ENCODE measurements at regions of chr10 and their contacts with region 1.

Region 1: DNA sequence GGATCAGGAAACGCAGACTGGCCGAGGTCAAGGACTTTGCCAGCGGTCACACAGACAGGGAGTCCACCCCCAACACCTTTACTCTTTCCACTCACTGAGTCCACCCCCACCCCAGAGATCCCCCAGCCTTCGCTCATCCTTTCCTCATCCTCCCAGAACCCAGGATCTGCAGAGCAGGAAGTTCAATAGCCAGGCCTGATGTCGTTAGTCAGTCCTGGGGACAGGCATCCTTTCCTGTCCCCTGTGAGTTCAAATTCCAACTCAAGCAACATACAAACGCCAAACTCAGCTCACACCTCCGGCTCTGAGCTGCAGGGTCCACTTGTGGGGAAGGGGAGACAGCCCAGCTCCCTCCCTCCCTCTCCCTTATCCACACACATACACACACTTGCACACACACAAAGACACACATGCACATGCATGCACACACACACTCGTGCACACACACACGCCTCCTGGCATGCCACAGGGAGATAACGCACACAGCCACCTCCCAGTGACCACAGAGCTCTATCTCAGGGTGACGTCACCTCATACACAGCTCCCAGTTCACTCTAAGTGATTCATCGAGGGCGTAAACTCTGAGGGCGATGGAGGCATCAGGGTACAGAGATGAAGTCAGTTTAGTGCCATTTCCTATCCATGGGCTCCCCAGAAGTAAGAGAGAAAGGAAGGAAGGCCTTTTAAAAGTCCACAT is 23.9 kb downstream of the CALML3 start:
- DNase-seq: peak; percentile 78 to 89
- H3K4me3 ChIP-seq: peak overlapping the region; percentile 26; the same call in 1 of the 2 replicates
- H3K27ac ChIP-seq: peak overlapping the region; percentile 100
- H3K4me1 ChIP-seq: peaks cover 98% of the 10 kb centered on the region
- H3K27me3 ChIP-seq: no peaks in the 10 kb centered on the region
- CTCF ChIP-seq: no peak

Region 2: GRCh38 chr10:5446390-5446926 is 102.2 kb before region 1 on chr10:
- CTCF ChIA-PET with region 1: interaction called, 3 read pairs
- POLR2A ChIA-PET with region 1: interaction called, 13 read pairs
- intact Hi-C with region 1: loop called (anchors 1 kb)
- DNase-seq: peak; percentile 87 to 95
- H3K4me3 ChIP-seq: peak overlapping the region; percentile 91
- H3K27ac ChIP-seq: peak overlapping the region; percentile 95
- H3K4me1 ChIP-seq: peaks cover 38% of the 10 kb centered on the region
- H3K27me3 ChIP-seq: no peaks in the 10 kb centered on the region
- CTCF ChIP-seq: no peak

Region 3: GRCh38 chr10:5488309-5489167 is 60.1 kb before region 1 on chr10:
- CTCF ChIA-PET with region 1: interaction called, 7 read pairs
- POLR2A ChIA-PET with region 1: interaction called, 13 read pairs
- intact Hi-C with region 1: loop called (anchors 1 kb)
- DNase-seq: peak; percentile 94 to 97
- H3K4me3 ChIP-seq: peak overlapping the region; percentile 45; the same call in 1 of the 2 replicates
- H3K27ac ChIP-seq: peak overlapping the region; percentile 98
- H3K4me1 ChIP-seq: peaks cover 37% of the 10 kb centered on the region
- H3K27me3 ChIP-seq: no peaks in the 10 kb centered on the region
- CTCF ChIP-seq: 0 out of 2 replicates have a peak, but pooled peaks have one; percentile 16

Region 4: DNA sequence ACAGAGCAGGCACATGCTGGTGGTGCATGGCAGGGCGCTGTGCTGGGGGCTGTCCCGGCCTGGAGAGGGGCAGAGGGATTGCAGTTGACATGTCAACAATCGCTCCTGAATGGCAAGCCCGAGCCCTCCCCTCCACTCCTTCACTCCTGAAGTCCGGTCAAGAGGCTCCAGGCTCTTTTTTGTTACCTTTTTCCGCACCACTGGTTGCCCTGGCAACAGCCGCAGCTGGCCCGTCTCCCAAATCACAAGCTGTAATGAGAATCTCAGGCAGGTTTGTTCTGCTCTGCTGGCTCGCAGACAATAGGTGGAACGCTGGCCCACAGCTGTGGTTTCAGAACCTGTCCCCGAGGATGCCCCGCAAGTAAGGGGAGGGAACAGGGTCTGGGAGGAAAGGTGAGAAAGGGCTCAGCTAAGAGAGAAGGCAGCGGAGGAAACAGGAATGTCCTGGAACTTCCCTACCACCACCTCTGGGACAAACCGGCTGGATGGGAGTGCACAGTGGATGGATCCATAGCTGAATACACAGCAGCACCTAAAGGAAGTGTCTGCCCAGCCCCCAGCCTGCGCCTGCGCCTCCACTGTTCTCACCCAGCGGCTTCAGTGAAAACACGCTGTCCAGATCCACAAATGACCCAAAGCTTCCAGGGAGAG is 35.0 kb after region 1 on chr10:
- CTCF ChIA-PET with region 1: interaction called, 4 read pairs
- POLR2A ChIA-PET with region 1: interaction called, 21 read pairs
- intact Hi-C with region 1: loop called (anchors 1 kb)
- DNase-seq: peak; percentile 94 to 96
- H3K4me3 ChIP-seq: peak overlapping the region; percentile 41; the same call in 1 of the 2 replicates
- H3K27ac ChIP-seq: peak overlapping the region; percentile 99
- H3K4me1 ChIP-seq: peaks cover 82% of the 10 kb centered on the region
- H3K27me3 ChIP-seq: no peaks in the 10 kb centered on the region
- CTCF ChIP-seq: no peak

Region 5: DNA sequence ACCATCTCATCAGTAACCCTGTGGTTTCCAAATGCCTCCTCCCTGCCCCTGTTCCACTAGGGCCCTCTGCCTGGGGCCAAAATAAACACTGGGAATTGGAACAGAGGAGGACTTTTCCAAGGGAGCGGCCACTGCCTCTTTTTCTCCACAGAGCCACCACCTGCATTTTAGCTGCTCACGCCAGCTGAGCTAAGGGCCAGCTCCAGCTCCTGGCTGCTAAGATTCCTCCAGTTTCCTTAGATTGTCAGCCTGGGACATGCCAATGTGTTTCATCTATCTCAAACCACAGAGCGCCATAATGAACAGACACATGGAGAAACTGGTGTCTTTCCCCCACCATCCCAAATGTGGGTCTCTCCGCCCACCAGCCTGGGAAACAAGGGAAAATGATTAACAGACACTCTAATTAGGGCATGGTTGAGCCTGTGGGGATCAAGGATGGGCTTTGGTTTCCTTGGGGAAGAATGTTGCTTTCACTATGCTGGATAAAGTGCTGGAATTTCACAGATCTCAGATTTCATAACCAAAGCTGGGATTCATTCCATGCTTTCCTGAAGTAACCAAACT is 65.6 kb after region 1 on chr10:
- CTCF ChIA-PET with region 1: no interaction called
- POLR2A ChIA-PET with region 1: interaction called, 31 read pairs
- intact Hi-C with region 1: no loop called
- DNase-seq: no peak
- H3K4me3 ChIP-seq: no peak overlapping the region
- H3K27ac ChIP-seq: no peak overlapping the region
- H3K4me1 ChIP-seq: peaks cover 49% of the 10 kb centered on the region
- H3K27me3 ChIP-seq: no peaks in the 10 kb centered on the region
- CTCF ChIP-seq: no peak

Region 6: GRCh38 chr10:5659702-5660528 is 111.2 kb after region 1 on chr10:
- CTCF ChIA-PET with region 1: no interaction called
- POLR2A ChIA-PET with region 1: no interaction called
- intact Hi-C with region 1: no loop called
- DNase-seq: peak; percentile 71 to 89
- H3K4me3 ChIP-seq: 0 out of 2 replicates have a peak overlapping the region, but pooled peaks have one; percentile 15
- H3K27ac ChIP-seq: peak overlapping the region; percentile 80
- H3K4me1 ChIP-seq: peaks cover 25% of the 10 kb centered on the region
- H3K27me3 ChIP-seq: no peaks in the 10 kb centered on the region
- CTCF ChIP-seq: no peak

Region 7: GRCh38 chr10:6211671-6212635 is 663.3 kb after region 1 on chr10:
- CTCF ChIA-PET with region 1: no interaction called
- POLR2A ChIA-PET with region 1: no interaction called
- intact Hi-C with region 1: no loop called
- DNase-seq: no peak
- H3K4me3 ChIP-seq: no peak overlapping the region
- H3K27ac ChIP-seq: no peak overlapping the region
- H3K4me1 ChIP-seq: no peaks in the 10 kb centered on the region
- H3K27me3 ChIP-seq: no peaks in the 10 kb centered on the region
- CTCF ChIP-seq: no peak